Activated CD4-positive, alpha-beta memory T cell treated with anti-CD3 and anti-CD28 coated beads for 36 hours (primary cell): ENCODE measurements at regions of chr18 and their contacts with region 1.

Region 1: GRCh38 chr18:74994502-74995419 is 214.2 kb downstream of the PTGR3 start:
- DNase-seq: peak; percentile 46
- H3K4me3 Mint-ChIP-seq: peak overlapping the region; percentile 64
- H3K27ac Mint-ChIP-seq: peak overlapping the region; percentile 89
- H3K4me1 Mint-ChIP-seq: peaks cover 46% of the 10 kb centered on the region
- H3K27me3 Mint-ChIP-seq: no peaks in the 10 kb centered on the region

Region 2: DNA sequence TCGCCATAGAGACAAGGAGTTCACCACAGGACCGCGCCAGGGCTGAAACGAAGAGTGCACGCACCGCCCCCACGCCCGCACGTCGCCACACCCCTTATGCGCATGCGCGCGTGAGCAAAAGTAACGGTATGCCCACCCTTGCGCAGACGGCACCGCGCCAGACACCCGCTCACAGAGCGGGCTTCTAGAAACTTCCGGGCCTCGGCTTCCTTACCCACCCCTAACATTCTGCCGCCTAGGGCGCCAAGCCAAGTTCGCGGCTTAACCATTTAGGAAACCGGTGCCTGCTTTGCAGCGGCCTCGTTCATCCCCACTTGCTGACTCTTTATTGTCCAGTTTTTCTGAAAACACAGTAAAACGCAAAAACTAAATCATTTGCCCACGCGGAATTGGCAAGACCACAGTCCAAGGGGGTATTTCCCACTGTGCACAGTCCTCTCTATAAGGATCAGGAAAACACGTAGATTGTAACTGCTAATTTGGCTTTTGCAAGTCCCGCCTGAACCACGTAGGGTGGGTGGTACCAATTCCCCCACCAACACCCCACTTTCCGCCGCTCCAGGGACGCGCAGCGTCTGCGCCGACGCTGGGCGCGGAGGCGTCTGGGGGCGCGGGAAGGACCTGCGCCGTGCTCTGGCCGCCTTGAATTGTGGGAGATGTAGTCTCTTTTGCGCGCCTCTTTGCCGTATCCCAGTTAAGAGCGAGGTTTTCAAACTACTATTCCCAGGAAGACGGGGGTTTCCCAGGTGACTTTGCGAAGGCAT is 846.8 kb before region 1 on chr18 and contains the starts of genes FBXO15 and TIMM21:
- CTCF ChIA-PET with region 1: no interaction called
- POLR2A ChIA-PET with region 1: no interaction called
- intact Hi-C with region 1: loop called (anchors 10 kb)
- DNase-seq: peak; percentile 97
- H3K4me3 Mint-ChIP-seq: peak within 1 kb of the TSS; percentile 95
- H3K27ac Mint-ChIP-seq: peak within 1 kb of the TSS; percentile 99
- H3K4me1 Mint-ChIP-seq: peaks cover 40% of the 10 kb centered on the region
- H3K27me3 Mint-ChIP-seq: peaks cover 2% of the 10 kb centered on the region
- total RNA-seq, gene FBXO15: 0.67 to 0.75 TPM
- total RNA-seq, gene TIMM21: 37.1 to 38.3 TPM

Region 3: GRCh38 chr18:74942319-74942910 is 52.3 kb before region 1 on chr18:
- CTCF ChIA-PET with region 1: no interaction called
- POLR2A ChIA-PET with region 1: no interaction called
- intact Hi-C with region 1: loop called (anchors 1 kb)
- DNase-seq: peak; percentile 61
- H3K4me3 Mint-ChIP-seq: peak overlapping the region; percentile 35
- H3K27ac Mint-ChIP-seq: no peak overlapping the region
- H3K4me1 Mint-ChIP-seq: peaks cover 16% of the 10 kb centered on the region
- H3K27me3 Mint-ChIP-seq: no peaks in the 10 kb centered on the region

Region 4: GRCh38 chr18:75036917-75037688 is 42.3 kb after region 1 on chr18:
- CTCF ChIA-PET with region 1: no interaction called
- POLR2A ChIA-PET with region 1: no interaction called
- intact Hi-C with region 1: loop called (anchors 1 kb)
- DNase-seq: no peak
- H3K4me3 Mint-ChIP-seq: no peak overlapping the region
- H3K27ac Mint-ChIP-seq: no peak overlapping the region
- H3K4me1 Mint-ChIP-seq: peaks cover 10% of the 10 kb centered on the region
- H3K27me3 Mint-ChIP-seq: no peaks in the 10 kb centered on the region

Region 5: GRCh38 chr18:75247611-75248421 is 253.1 kb after region 1 on chr18:
- CTCF ChIA-PET with region 1: no interaction called
- POLR2A ChIA-PET with region 1: no interaction called
- intact Hi-C with region 1: loop called (anchors 10 kb)
- DNase-seq: no peak
- H3K4me3 Mint-ChIP-seq: peak overlapping the region; percentile 77
- H3K27ac Mint-ChIP-seq: peak overlapping the region; percentile 87
- H3K4me1 Mint-ChIP-seq: peaks cover 58% of the 10 kb centered on the region
- H3K27me3 Mint-ChIP-seq: no peaks in the 10 kb centered on the region